ENCODE measurements at regions of chr5 and their contacts with region 1.

Region 1: DNA sequence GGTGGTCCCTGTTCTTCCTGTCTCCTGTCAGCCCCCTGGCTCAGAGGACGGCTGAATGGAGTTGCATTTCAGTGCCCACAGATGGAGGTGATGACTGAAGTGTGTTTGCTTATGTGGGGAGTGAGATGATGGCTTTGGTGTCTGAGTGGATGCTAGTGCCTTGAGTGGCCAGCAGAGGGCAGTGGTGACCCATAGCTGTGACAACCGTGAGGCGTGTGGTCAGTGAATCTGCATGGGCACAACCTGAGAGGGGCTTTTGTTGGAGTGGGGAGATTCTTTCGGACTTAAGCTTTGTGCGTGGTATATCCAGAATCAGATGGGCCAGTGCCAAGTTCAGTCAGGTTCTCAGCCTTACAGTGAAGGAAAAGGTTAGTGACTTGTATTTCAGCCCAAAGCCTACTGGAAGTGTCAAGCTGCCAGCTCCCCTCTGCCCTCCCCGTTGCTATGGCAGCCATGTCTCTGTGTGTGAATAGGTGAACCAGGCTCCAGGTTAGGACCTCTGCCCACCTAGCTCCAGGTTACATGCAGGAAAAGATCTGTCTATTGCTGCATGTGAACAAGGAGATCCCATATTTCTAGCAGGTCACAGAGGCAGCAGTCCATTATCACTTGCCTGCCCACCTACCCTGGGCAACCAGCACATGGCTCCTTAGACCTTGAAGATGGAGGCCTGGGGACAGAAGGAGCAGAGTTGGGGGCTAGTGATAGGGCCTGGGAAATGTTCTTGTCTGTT is 14.7 kb upstream of the CXXC5 start:
- DNase-seq: peak in 1 of 2 experiments; percentile 83
- H3K4me3 ChIP-seq: no peak overlapping the region
- H3K27ac ChIP-seq: no peak overlapping the region
- H3K4me1 ChIP-seq: peaks cover 14 to 27% (median 20%) of the 10 kb centered on the region in 4 experiments
- H3K27me3 ChIP-seq: no peaks in the 10 kb centered on the region
- CTCF ChIP-seq: peak in 2 of 3 experiments; percentile 88 to 100; a peak in 3 of 4 replicates
- EP300 ChIP-seq: no peak
- POLR2A ChIP-seq: peak in 1 of 2 experiments; percentile 34; a peak in 1 of 3 replicates
- RAD21 ChIP-seq: peak; percentile 94 to 95

Region 2: DNA sequence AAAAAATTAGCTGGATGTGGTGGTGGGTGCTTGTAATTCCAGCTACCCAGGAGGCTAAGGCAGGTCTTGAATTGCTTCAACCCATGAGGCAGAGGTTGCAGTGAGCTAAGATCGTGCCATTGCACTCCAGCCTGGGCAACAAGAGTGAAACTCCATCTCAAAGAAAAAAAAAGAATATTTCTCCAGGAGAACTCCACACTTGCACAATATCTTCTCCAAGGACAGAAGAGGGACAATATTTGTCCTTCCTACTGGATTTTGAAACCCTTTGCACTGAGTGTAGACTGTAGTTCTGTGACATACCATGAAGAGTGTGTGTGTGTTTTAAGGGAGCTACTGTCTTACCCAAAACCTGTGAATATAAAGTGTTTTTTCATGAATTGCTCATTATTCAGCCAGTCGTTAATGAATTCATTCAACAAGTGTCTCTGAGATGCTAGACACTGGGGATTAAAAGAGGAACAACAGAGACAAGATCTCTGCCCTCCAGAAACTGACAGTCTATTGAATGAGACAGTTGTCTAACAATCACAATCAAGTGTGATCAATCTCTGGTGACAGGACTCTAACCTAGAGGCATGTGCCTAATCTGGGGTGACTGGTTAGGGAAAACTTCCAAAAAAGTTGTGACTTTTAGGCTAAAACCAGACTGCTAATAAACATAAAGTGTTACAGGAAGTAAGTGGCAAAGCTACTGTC is 82.1 kb before region 1 on chr5:
- CTCF ChIA-PET with region 1: no interaction called
- POLR2A ChIA-PET with region 1: no interaction called
- DNase-seq: no peak
- H3K4me3 ChIP-seq: no peak overlapping the region
- H3K27ac ChIP-seq: no peak overlapping the region
- H3K4me1 ChIP-seq: no peaks in the 10 kb centered on the region
- H3K27me3 ChIP-seq: no peaks in the 10 kb centered on the region
- CTCF ChIP-seq: no peak
- EP300 ChIP-seq: no peak
- POLR2A ChIP-seq: no peak
- RAD21 ChIP-seq: no peak

Region 3: GRCh38 chr5:139619861-139620260 is 13.6 kb before region 1 on chr5:
- CTCF ChIA-PET with region 1: interaction called, 10 read pairs
- POLR2A ChIA-PET with region 1: interaction called, 5 read pairs
- DNase-seq: no peak
- H3K4me3 ChIP-seq: no peak overlapping the region
- H3K27ac ChIP-seq: no peak overlapping the region
- H3K4me1 ChIP-seq: no peaks in the 10 kb centered on the region
- H3K27me3 ChIP-seq: no peaks in the 10 kb centered on the region
- CTCF ChIP-seq: no peak
- EP300 ChIP-seq: no peak
- POLR2A ChIP-seq: no peak
- RAD21 ChIP-seq: no peak

Region 4: DNA sequence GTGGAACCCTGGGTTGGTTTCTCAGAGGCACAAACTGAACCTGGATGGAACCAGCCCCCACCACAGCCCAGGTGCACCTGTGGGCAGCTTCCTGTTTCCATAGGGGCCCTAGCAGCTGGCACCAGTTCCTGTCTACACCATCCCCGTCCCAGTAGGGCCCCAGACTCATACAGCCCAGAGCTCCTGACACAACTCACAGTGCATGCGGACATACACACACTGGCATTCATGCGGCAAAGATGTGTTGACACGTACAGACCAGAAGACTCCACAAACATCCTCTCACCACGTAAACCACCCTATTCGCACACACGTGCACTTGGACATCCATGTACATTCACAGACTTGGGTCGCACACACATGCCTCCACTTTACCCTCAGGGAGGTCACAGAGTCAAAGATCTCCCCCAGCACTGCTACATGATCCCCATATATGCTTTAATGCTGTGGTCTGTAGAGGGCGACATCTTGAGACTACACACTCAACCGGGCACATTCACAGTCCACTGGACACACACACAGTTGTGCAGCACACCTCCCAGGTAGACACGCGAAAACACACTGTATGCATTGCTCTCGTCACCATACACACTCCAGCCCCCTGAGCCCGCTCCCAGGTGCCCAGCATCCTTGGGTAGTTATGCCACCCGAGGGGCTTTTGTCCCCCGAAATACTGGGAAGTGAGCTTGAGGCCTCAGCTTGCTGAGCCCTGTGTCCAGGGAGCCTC is 37.1 kb after region 1 on chr5:
- CTCF ChIA-PET with region 1: interaction called, 171 read pairs
- POLR2A ChIA-PET with region 1: interaction called, 3 read pairs
- DNase-seq: no peak
- H3K4me3 ChIP-seq: no peak overlapping the region
- H3K27ac ChIP-seq: no peak overlapping the region
- H3K4me1 ChIP-seq: peaks cover 9 to 55% (median 43%) of the 10 kb centered on the region in 4 experiments
- H3K27me3 ChIP-seq: no peaks in the 10 kb centered on the region
- CTCF ChIP-seq: peak in 1 of 3 experiments; percentile 50; a peak in 1 of 4 replicates
- EP300 ChIP-seq: no peak
- POLR2A ChIP-seq: no peak
- RAD21 ChIP-seq: no peak

Region 5: GRCh38 chr5:139696894-139697658 is 63.6 kb after region 1 on chr5:
- CTCF ChIA-PET with region 1: interaction called, 97 read pairs
- POLR2A ChIA-PET with region 1: interaction called, 11 read pairs
- DNase-seq: no peak
- H3K4me3 ChIP-seq: peak overlapping the region; percentile 28 to 58 (median 34); a peak in 7 of 8 replicates
- H3K27ac ChIP-seq: 0 out of 2 replicates have a peak overlapping the region, but pooled peaks have one; percentile 20
- H3K4me1 ChIP-seq: peaks cover 24 to 51% (median 38%) of the 10 kb centered on the region in 4 experiments
- H3K27me3 ChIP-seq: peaks cover 0 to 4% (median under 1%) of the 10 kb centered on the region in 4 experiments; a peak in 4 of 7 replicates
- CTCF ChIP-seq: no peak
- EP300 ChIP-seq: no peak
- POLR2A ChIP-seq: peak in 1 of 2 experiments; percentile 51; a peak in 1 of 3 replicates
- RAD21 ChIP-seq: no peak

Region 6: GRCh38 chr5:139733698-139734538 is 100.5 kb after region 1 on chr5:
- CTCF ChIA-PET with region 1: interaction called, 39 read pairs
- POLR2A ChIA-PET with region 1: no interaction called
- DNase-seq: peak in 1 of 2 experiments; percentile 59
- H3K4me3 ChIP-seq: no peak overlapping the region
- H3K27ac ChIP-seq: no peak overlapping the region
- H3K4me1 ChIP-seq: peaks cover 0 to 19% (median 10%) of the 10 kb centered on the region in 4 experiments; a peak in 6 of 7 replicates
- H3K27me3 ChIP-seq: no peaks in the 10 kb centered on the region
- CTCF ChIP-seq: no peak
- EP300 ChIP-seq: no peak
- POLR2A ChIP-seq: no peak
- RAD21 ChIP-seq: no peak

Region 7: DNA sequence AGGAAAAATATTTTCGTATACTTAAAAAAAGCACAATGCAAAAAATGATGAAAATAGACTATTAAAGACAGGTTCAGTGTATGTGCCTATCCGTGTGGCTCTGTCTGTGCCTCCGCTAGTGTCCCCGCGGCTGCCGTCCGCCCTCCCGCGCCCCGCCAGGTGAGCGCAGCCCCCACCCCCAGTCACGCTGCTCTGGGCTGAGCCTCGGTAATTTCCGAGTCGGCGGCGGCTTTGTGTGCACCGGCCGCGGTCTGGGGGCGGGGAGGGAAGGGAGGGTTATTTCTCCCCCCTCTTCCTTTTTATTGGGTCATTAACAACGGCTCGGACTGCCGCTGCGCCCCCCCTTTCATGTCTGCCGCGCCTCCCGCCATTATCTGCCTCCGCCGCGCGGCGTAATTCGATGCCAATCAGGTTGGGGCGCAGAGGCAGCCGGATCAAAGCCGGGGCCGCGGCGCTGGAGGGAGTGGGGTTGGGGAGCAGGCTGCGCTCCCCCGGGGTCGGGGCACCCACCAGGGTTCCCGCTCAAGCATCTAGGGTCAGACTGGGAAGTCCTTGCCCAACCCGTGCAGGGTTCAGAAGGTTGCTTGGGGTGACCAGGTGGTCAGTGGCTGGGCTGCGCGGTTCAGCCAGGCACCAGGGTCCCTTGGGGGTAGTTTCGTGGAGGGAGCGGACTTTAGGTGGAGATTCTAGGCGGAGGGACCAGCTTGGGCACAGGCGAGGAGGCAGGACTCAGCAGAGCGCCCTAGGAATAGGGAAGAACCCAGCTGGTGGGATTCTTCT is 122.6 kb after region 1 on chr5:
- CTCF ChIA-PET with region 1: interaction called, 58 read pairs
- POLR2A ChIA-PET with region 1: interaction called, 5 read pairs
- DNase-seq: peak in 1 of 2 experiments; percentile 82
- H3K4me3 ChIP-seq: peak overlapping the region; percentile 29 to 59 (median 39)
- H3K27ac ChIP-seq: no peak overlapping the region
- H3K4me1 ChIP-seq: peaks cover 4 to 12% (median 9%) of the 10 kb centered on the region in 4 experiments
- H3K27me3 ChIP-seq: peaks cover 17 to 69% (median 60%) of the 10 kb centered on the region in 4 experiments
- CTCF ChIP-seq: no peak
- EP300 ChIP-seq: no peak
- POLR2A ChIP-seq: no peak
- RAD21 ChIP-seq: no peak

Region 8: GRCh38 chr5:139908749-139909148 is 275.3 kb after region 1 on chr5:
- CTCF ChIA-PET with region 1: no interaction called
- POLR2A ChIA-PET with region 1: no interaction called
- DNase-seq: no peak
- H3K4me3 ChIP-seq: no peak overlapping the region
- H3K27ac ChIP-seq: no peak overlapping the region
- H3K4me1 ChIP-seq: peaks cover 0 to 16% (median 6%) of the 10 kb centered on the region in 4 experiments; a peak in 6 of 7 replicates
- H3K27me3 ChIP-seq: peaks cover 3 to 32% (median 17%) of the 10 kb centered on the region in 4 experiments; a peak in 6 of 7 replicates
- CTCF ChIP-seq: no peak
- EP300 ChIP-seq: no peak
- POLR2A ChIP-seq: no peak
- RAD21 ChIP-seq: no peak

Measured in H1 (cell line).